ENCODE measurements at regions of chr22 and their contacts with region 1.

Region 1: DNA sequence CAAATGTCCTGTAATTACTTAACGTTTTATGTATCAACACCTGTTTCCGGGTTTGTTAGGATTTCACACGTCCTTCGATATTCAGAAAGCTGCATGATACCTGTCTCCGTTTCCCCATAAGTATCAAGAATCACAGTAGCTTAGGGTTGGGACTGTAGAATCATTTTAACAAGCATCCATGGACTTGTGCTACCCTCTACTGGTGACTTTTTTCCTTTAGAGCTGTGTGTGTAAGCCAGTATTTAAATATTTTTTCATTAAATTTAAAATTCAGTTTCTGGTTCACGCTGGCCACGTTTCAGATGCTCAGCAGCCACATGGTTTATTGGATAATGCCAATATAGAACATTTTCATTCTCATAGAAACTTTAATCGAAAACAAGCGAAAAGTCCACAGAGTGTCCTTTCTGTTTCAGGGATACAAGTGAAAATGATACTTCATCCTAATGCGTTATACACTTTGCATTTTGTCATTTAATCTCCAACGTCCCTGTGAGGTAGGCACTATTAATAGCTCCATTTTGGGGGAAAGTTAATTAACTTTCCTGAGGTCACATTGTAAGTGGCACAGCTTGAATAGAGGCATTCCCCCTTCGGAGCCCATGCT is 61.5 kb upstream of the SLC25A18 start:
- DNase-seq: peak; percentile 57
- ATAC-seq: peak; percentile 97
- H3K4me3 ChIP-seq: no peak overlapping the region
- H3K27ac ChIP-seq: no peak overlapping the region
- H3K4me1 ChIP-seq: no peaks in the 10 kb centered on the region
- H3K27me3 ChIP-seq: no peaks in the 10 kb centered on the region
- CTCF ChIP-seq: peak; percentile 61 to 88 (median 61); a peak in 5 of 6 replicates
- EP300 ChIP-seq: no peak
- POLR2A ChIP-seq: no peak
- RAD21 ChIP-seq: peak; percentile 94

Region 2: GRCh38 chr22:16917144-16918003 is 584.4 kb before region 1 on chr22:
- CTCF ChIA-PET with region 1: interaction called, 8 read pairs
- POLR2A ChIA-PET with region 1: no interaction called
- RAD21 ChIA-PET with region 1: interaction called, 11 read pairs
- SMC1A ChIA-PET with region 1: interaction called, 5 read pairs
- in situ Hi-C with region 1: loop called (anchors 5 kb)
- intact Hi-C with region 1: loop called (anchors 5 kb)
- DNase-seq: peak; percentile 12
- ATAC-seq: peak; percentile 92
- H3K4me3 ChIP-seq: no peak overlapping the region
- H3K27ac ChIP-seq: no peak overlapping the region
- H3K4me1 ChIP-seq: no peaks in the 10 kb centered on the region; the same call in 1 of the 2 replicates
- H3K27me3 ChIP-seq: no peaks in the 10 kb centered on the region
- CTCF ChIP-seq: peak; percentile 69 to 77 (median 75)
- EP300 ChIP-seq: no peak
- POLR2A ChIP-seq: no peak
- RAD21 ChIP-seq: peak; percentile 69

Region 3: GRCh38 chr22:17077255-17077654 is 424.5 kb before region 1 on chr22:
- CTCF ChIA-PET with region 1: interaction called, 19 read pairs
- POLR2A ChIA-PET with region 1: no interaction called
- RAD21 ChIA-PET with region 1: interaction called, 18 read pairs
- SMC1A ChIA-PET with region 1: interaction called, 17 read pairs
- in situ Hi-C with region 1: loop called (anchors 5 kb)
- intact Hi-C with region 1: loop called (anchors 1 kb)
- DNase-seq: no peak
- ATAC-seq: no peak
- H3K4me3 ChIP-seq: no peak overlapping the region
- H3K27ac ChIP-seq: no peak overlapping the region
- H3K4me1 ChIP-seq: no peaks in the 10 kb centered on the region
- H3K27me3 ChIP-seq: no peaks in the 10 kb centered on the region
- CTCF ChIP-seq: no peak
- EP300 ChIP-seq: no peak
- POLR2A ChIP-seq: no peak
- RAD21 ChIP-seq: no peak

Region 4: DNA sequence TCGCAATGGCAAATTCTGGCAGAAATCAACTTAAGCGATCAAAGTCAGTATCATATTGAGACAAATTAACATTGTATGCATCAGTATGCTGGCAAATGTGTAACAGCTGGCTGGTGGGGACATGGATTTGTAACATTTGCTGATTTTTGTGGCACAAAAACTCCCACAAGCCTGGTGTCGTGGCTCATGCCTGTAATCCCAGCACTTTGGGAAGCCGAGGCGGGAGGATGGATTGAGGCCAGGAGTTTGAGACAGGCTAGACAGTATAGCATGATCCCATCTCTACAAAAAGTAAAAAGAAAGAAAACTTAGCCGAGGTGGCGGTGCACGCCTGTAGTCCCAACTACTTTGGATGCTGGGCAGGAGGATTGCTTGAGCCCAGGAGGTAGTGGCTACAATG is 325.1 kb before region 1 on chr22:
- CTCF ChIA-PET with region 1: interaction called, 157 read pairs
- POLR2A ChIA-PET with region 1: no interaction called
- RAD21 ChIA-PET with region 1: interaction called, 88 read pairs
- SMC1A ChIA-PET with region 1: interaction called, 64 read pairs
- in situ Hi-C with region 1: loop called (anchors 5 kb)
- intact Hi-C with region 1: loop called (anchors 1 kb)
- DNase-seq: no peak
- ATAC-seq: no peak
- H3K4me3 ChIP-seq: no peak overlapping the region
- H3K27ac ChIP-seq: no peak overlapping the region
- H3K4me1 ChIP-seq: peaks cover 6% of the 10 kb centered on the region
- H3K27me3 ChIP-seq: no peaks in the 10 kb centered on the region
- CTCF ChIP-seq: no peak
- EP300 ChIP-seq: no peak
- POLR2A ChIP-seq: no peak
- RAD21 ChIP-seq: no peak

Region 5: DNA sequence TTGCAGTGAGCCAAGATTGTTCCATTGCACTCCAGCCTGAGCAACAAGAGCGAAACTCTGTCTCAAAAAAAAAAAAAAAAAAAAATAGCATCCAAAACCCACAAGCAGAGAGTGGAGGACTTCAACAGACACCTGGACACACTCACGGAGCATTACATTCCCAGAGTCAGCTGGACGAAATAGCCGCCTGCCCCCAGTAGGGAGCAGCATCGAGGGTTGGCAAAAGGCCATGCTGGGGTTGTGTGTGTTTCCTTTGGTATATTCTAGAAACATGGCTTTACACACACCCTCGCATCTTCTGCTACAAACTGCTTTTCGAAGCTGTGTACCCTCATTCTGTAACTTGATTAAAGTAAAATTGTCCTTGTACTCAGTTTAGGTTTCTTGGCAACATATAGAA is 287.8 kb before region 1 on chr22:
- CTCF ChIA-PET with region 1: interaction called, 15 read pairs
- POLR2A ChIA-PET with region 1: no interaction called
- RAD21 ChIA-PET with region 1: interaction called, 8 read pairs
- SMC1A ChIA-PET with region 1: interaction called, 9 read pairs
- in situ Hi-C with region 1: no loop called
- intact Hi-C with region 1: no loop called
- DNase-seq: no peak
- ATAC-seq: no peak
- H3K4me3 ChIP-seq: no peak overlapping the region
- H3K27ac ChIP-seq: no peak overlapping the region
- H3K4me1 ChIP-seq: peaks cover 19% of the 10 kb centered on the region
- H3K27me3 ChIP-seq: no peaks in the 10 kb centered on the region
- CTCF ChIP-seq: peak; percentile 35 to 59 (median 42)
- EP300 ChIP-seq: no peak
- POLR2A ChIP-seq: no peak
- RAD21 ChIP-seq: peak; percentile 43; the same call in 1 of the 2 replicates

Region 6: DNA sequence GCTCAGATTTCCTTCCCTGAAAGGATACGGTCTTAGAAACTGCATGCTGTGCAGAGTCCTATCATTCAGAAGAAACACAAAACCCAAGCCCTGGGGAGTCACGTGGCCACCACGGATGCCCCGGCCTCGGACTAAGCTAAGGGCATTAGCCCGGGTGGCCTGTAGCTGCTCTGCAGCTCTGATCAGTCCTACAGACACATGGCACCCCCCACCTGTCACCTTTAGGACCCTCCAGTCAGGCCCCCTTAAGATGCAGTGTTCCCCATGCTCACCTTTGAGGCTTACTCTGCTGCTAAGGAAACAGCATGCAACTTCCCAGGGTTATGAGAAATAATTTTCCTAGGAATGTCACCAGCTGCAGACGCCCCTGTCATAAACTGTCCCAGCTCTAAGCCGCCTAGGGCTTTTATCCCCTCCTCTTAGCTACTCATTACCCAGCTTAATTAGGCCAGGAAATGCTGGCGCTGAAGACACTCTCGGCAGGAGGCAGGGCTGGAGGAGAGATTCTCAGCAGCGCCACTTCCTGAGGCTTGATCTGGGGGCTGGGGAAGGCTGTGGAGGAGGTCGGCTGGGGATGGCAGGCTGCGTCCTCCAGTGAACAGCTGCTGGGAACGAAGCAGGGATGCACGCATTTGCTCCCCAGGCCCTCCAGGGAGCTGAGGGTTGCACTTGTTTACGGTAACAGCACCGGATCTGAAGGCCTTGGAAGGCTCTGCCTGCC is 235.4 kb before region 1 on chr22:
- CTCF ChIA-PET with region 1: interaction called, 8 read pairs
- POLR2A ChIA-PET with region 1: no interaction called
- RAD21 ChIA-PET with region 1: interaction called, 13 read pairs
- SMC1A ChIA-PET with region 1: interaction called, 5 read pairs
- in situ Hi-C with region 1: no loop called
- intact Hi-C with region 1: no loop called
- DNase-seq: no peak
- ATAC-seq: peak; percentile 67
- H3K4me3 ChIP-seq: no peak overlapping the region
- H3K27ac ChIP-seq: no peak overlapping the region
- H3K4me1 ChIP-seq: peaks cover 3% of the 10 kb centered on the region; the same call in 1 of the 2 replicates
- H3K27me3 ChIP-seq: no peaks in the 10 kb centered on the region
- CTCF ChIP-seq: no peak
- EP300 ChIP-seq: no peak
- POLR2A ChIP-seq: no peak
- RAD21 ChIP-seq: no peak

Region 7: DNA sequence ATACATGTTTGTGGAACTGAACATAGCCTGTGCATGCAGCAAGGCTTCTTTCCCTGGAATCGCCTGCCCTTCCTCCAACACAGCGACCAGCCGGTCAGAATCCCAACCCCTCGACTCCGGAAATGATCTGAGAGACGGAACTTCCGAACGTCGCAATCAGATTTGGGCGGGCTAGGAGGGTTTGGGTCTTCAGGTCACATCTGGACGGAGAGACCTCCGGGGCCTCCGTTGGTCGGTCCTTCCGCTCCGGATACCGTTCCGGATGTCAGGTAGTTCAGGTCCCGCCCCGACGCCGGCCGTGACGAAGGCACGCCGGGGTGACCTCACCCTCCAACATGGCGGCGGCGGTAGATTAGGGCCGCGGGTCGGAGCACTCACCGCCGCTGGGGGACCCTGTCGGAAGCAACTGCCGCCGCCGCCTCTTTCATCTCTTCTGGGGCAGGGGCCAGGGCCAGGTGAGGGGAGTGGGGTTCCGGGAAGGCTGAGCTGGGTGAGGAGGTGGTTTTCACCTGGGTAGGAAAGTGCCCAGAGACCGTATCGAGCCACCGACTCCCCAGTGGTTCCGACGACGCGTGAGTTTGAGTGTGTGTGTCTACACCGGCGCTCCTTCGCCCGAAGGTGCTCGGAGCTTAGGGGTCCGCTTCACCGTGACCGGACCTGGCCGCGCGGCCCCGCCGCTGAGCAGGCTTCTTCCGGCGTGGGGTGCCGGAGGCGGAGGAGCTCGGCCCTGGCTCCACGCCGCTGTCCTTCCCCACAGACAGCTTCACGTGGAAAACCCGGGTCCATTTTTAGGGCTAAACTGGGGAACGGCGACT is 136.9 kb after region 1 on chr22 and contains the start of gene BCL2L13:
- CTCF ChIA-PET with region 1: no interaction called
- POLR2A ChIA-PET with region 1: no interaction called
- RAD21 ChIA-PET with region 1: no interaction called
- SMC1A ChIA-PET with region 1: no interaction called
- in situ Hi-C with region 1: no loop called
- intact Hi-C with region 1: no loop called
- DNase-seq: peak; percentile 57
- ATAC-seq: peak; percentile 97
- H3K4me3 ChIP-seq: peak within 1 kb of the TSS; percentile 92
- H3K27ac ChIP-seq: peak within 1 kb of the TSS; percentile 86
- H3K4me1 ChIP-seq: peaks cover 8% of the 10 kb centered on the region
- H3K27me3 ChIP-seq: no peaks in the 10 kb centered on the region
- CTCF ChIP-seq: peak in 1 of 3 experiments; percentile 16; a peak in 1 of 6 replicates
- EP300 ChIP-seq: no peak
- POLR2A ChIP-seq: peak; percentile 94
- RAD21 ChIP-seq: no peak
- polyA plus RNA-seq, gene BCL2L13: 18.6 to 19.1 TPM

Region 8: DNA sequence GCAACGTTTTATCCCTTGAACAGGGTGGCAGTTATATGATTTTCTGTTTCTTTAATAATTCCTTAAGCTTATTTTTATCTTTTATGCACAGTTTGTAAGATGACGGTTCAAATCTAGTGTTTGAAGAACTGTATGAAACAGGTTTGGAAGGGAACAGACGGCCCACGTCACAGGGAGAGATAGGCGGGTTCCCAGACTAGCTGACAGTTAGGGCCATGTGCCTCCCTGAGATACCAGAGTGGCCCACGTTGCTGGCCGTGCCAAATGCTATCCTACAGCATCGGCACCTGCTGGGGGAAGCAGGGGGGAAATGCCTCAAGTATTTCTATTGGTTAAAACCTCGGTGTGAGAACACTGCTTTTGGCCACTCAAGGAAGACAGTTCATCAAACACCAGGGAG is 322.7 kb after region 1 on chr22:
- CTCF ChIA-PET with region 1: no interaction called
- POLR2A ChIA-PET with region 1: no interaction called
- RAD21 ChIA-PET with region 1: no interaction called
- SMC1A ChIA-PET with region 1: no interaction called
- in situ Hi-C with region 1: no loop called
- intact Hi-C with region 1: no loop called
- DNase-seq: no peak
- ATAC-seq: no peak
- H3K4me3 ChIP-seq: no peak overlapping the region
- H3K27ac ChIP-seq: no peak overlapping the region
- H3K4me1 ChIP-seq: no peaks in the 10 kb centered on the region
- H3K27me3 ChIP-seq: no peaks in the 10 kb centered on the region
- CTCF ChIP-seq: no peak
- EP300 ChIP-seq: no peak
- POLR2A ChIP-seq: no peak
- RAD21 ChIP-seq: no peak

Measured in GM12878 (cell line).